ENCODE measurements at regions of chr11 and their contacts with region 1.

Region 1: DNA sequence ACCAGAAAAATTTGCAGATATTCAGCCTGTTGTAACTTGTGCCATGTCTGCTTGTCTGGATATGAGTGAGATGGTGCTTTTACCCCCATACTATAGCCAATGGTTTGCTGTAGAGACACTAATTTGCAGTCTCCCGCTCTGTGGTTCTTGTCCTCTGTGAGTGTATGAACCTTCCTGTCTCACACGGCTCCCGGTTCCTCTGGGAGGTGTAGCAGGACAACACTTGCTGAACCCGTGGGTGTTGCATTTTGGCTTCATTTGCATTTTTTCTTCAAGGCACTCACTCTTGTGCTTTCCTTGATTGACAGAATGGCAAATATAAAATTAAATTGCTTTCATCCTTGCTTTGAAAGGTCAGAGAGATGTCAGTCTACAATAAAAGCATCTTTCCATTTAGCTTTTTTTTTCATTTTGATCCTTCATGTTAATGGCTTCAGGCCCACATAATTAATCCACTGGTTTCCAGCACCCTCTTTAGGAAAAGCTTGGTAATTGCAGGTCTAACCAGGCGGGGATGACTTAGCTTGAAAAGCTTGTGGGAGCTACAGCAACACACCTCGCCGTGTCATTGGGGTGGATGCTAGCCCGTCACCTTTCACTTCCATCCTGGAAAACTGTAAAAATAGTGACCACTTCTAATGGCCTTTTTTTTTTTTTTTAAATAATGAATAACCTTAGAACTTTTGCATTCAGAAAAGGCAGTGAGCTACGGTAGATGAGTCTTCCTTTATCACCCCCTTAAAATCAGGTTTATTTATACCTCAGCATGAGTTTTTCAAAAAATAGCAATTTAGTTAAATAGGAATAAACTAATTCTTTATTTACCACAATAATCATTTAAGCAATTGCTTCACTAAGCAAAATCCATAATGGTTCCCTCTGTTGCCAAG is 27.4 kb upstream of the ST14 start:
- DNase-seq: peak; percentile 81
- ATAC-seq: peak; percentile 89
- H3K4me3 ChIP-seq: no peak overlapping the region
- H3K4me3 Mint-ChIP-seq: no peak overlapping the region
- H3K27ac ChIP-seq: no peak overlapping the region
- H3K27ac Mint-ChIP-seq: no peak overlapping the region
- H3K4me1 ChIP-seq: peaks cover 0 to 9% of the 10 kb centered on the region in 2 donors
- H3K4me1 Mint-ChIP-seq: peaks cover 14% of the 10 kb centered on the region
- H3K27me3 ChIP-seq: no peaks in the 10 kb centered on the region
- H3K27me3 Mint-ChIP-seq: no peaks in the 10 kb centered on the region
- CTCF ChIP-seq: peak; percentile 88

Region 2: GRCh38 chr11:129895126-129896041 is 236.8 kb before region 1 on chr11 and contains the start of gene NFRKB:
- CTCF ChIA-PET with region 1: interaction called, 16 read pairs
- POLR2A ChIA-PET with region 1: no interaction called
- intact Hi-C with region 1: no loop called
- DNase-seq: peak; percentile 86
- ATAC-seq: peak; percentile 97
- H3K4me3 ChIP-seq: peak within 1 kb of the TSS; percentile 71 to 92 (median 79)
- H3K4me3 Mint-ChIP-seq: peak within 1 kb of the TSS; percentile 92
- H3K27ac ChIP-seq: peak within 1 kb of the TSS; percentile 35 to 53
- H3K27ac Mint-ChIP-seq: peak within 1 kb of the TSS; percentile 82
- H3K4me1 ChIP-seq: peaks cover 10 to 14% of the 10 kb centered on the region in 2 donors
- H3K4me1 Mint-ChIP-seq: peaks cover 22% of the 10 kb centered on the region
- H3K27me3 ChIP-seq: no peaks in the 10 kb centered on the region
- H3K27me3 Mint-ChIP-seq: no peaks in the 10 kb centered on the region
- CTCF ChIP-seq: no peak
- total RNA-seq, gene NFRKB: 36.9 and 40.4 TPM in 2 replicates

Region 3: GRCh38 chr11:129930296-129930695 is 201.9 kb before region 1 on chr11:
- CTCF ChIA-PET with region 1: interaction called, 339 read pairs
- POLR2A ChIA-PET with region 1: no interaction called
- intact Hi-C with region 1: no loop called
- DNase-seq: no peak
- ATAC-seq: no peak
- H3K4me3 ChIP-seq: no peak overlapping the region
- H3K4me3 Mint-ChIP-seq: no peak overlapping the region
- H3K27ac ChIP-seq: no peak overlapping the region
- H3K27ac Mint-ChIP-seq: no peak overlapping the region
- H3K4me1 ChIP-seq: no peaks in the 10 kb centered on the region
- H3K4me1 Mint-ChIP-seq: no peaks in the 10 kb centered on the region
- H3K27me3 ChIP-seq: no peaks in the 10 kb centered on the region
- H3K27me3 Mint-ChIP-seq: no peaks in the 10 kb centered on the region
- CTCF ChIP-seq: no peak

Region 4: DNA sequence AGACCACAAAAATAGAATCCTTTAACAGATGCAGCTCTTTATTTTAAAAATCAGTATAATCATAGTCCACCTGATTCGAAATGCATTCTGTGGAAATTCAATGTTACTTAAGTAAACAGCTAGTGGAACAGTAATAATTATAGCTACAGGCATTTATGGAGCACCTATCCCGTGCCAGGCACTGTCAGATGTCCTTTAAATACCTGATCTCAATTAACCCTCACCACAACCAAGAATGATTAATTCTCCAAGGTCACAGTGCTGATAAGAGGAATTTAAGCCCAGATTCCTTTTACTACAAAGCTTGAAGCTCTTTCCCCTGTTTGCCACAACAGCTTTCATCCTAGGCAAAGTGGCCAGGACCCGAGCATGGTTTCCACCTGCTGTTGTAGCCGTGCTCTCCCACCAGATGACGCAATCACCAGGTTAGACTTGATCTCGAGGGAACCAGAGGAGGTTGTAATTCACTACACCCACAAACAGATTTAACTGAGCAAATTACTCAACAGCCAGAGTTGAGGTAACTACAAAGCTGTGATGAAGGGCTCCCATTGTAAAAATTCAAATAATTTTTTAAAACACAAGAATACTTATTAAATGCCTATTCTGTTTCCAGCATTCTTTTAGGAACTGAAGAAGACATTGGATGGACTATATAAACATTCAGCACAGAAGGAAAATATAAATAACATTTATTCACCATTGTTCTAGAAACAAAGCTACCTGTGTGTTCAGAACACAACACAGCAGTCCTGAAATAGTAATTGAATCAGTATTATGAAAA is 139.9 kb before region 1 on chr11:
- CTCF ChIA-PET with region 1: interaction called, 98 read pairs
- POLR2A ChIA-PET with region 1: interaction called, 3 read pairs
- intact Hi-C with region 1: loop called (anchors 1 kb)
- DNase-seq: peak; percentile 59
- ATAC-seq: peak; percentile 78
- H3K4me3 ChIP-seq: no peak overlapping the region
- H3K4me3 Mint-ChIP-seq: no peak overlapping the region
- H3K27ac ChIP-seq: no peak overlapping the region
- H3K27ac Mint-ChIP-seq: no peak overlapping the region
- H3K4me1 ChIP-seq: peaks cover 0 to 7% of the 10 kb centered on the region in 2 donors
- H3K4me1 Mint-ChIP-seq: peaks cover 8% of the 10 kb centered on the region
- H3K27me3 ChIP-seq: no peaks in the 10 kb centered on the region
- H3K27me3 Mint-ChIP-seq: no peaks in the 10 kb centered on the region
- CTCF ChIP-seq: peak; percentile 50

Region 5: DNA sequence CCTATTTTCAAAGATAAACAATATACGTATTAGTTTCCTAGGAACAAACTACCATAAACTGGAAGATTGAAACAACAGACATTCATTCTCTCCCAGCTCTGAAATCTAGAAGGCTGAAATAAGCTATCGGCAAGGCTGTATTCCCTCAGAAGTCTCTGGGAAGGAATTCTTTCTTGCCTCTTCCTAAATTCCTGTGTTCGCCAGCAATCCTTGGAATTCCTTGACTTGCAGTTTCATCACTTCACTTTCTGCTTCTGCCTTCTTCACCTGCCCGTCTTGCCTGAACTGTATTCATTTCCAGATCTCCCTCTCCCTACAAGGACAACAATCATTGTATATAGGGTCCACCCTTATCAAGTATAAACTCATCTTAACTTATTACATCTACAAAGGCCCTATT is 111.9 kb before region 1 on chr11:
- CTCF ChIA-PET with region 1: interaction called, 16 read pairs
- POLR2A ChIA-PET with region 1: no interaction called
- intact Hi-C with region 1: no loop called
- DNase-seq: no peak
- ATAC-seq: no peak
- H3K4me3 ChIP-seq: no peak overlapping the region
- H3K4me3 Mint-ChIP-seq: no peak overlapping the region
- H3K27ac ChIP-seq: no peak overlapping the region
- H3K27ac Mint-ChIP-seq: no peak overlapping the region
- H3K4me1 ChIP-seq: peaks cover 7 to 9% of the 10 kb centered on the region in 2 donors
- H3K4me1 Mint-ChIP-seq: peaks cover 13% of the 10 kb centered on the region
- H3K27me3 ChIP-seq: peaks cover 0 to 32% (median 16%) of the 10 kb centered on the region in 4 experiments
- H3K27me3 Mint-ChIP-seq: peaks cover 49% of the 10 kb centered on the region
- CTCF ChIP-seq: no peak

Region 6: GRCh38 chr11:130076778-130077481 is 55.3 kb before region 1 on chr11:
- CTCF ChIA-PET with region 1: interaction called, 29 read pairs
- POLR2A ChIA-PET with region 1: interaction called, 3 read pairs
- intact Hi-C with region 1: no loop called
- DNase-seq: no peak
- ATAC-seq: no peak
- H3K4me3 ChIP-seq: no peak overlapping the region
- H3K4me3 Mint-ChIP-seq: no peak overlapping the region
- H3K27ac ChIP-seq: no peak overlapping the region
- H3K27ac Mint-ChIP-seq: no peak overlapping the region
- H3K4me1 ChIP-seq: peaks cover 3 to 9% of the 10 kb centered on the region in 2 donors
- H3K4me1 Mint-ChIP-seq: peaks cover 49% of the 10 kb centered on the region
- H3K27me3 ChIP-seq: no peaks in the 10 kb centered on the region
- H3K27me3 Mint-ChIP-seq: no peaks in the 10 kb centered on the region
- CTCF ChIP-seq: no peak

Region 7: DNA sequence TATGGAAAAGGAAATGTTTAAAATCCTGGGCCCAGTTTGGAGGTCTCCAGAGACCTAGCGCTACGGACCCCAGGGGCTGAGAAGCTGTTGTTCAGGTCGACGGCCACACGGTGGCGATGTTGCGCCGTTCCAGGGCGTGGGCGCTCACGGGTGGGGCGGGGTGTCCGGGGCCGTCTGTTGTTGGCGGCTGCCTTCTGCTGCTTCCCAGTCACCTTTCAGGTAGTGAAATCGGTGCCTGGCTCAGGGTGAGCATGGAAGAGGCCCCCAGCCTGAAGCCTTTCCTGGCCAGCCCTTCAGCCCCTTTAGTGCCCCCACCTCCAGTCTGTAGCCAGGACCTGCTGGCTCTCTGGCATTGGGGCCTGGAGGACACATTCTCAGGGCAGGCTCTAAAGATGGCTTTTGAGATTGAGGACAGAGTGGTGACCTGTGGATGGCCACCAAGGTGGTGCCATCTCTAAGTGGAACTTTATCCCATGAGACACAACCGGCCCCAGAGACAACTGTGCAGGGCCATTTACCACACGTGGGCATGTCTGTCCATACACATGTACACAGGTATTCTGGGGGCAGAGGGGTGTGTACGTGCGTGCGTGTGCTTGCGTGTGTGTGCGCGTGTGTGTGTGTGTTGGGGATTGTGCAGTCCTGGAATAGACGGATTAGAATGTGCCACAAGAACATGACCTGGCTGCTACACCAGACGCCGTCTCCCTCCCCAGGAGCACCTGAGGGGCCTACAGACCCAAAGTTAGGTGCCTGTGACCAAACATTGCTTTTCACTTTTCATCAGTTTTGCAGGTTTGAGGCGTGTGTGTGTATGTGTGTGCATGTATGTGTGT is 81.2 kb after region 1 on chr11:
- CTCF ChIA-PET with region 1: interaction called, 24 read pairs
- POLR2A ChIA-PET with region 1: no interaction called
- intact Hi-C with region 1: no loop called
- DNase-seq: peak; percentile 81
- ATAC-seq: peak; percentile 98
- H3K4me3 ChIP-seq: no peak overlapping the region
- H3K4me3 Mint-ChIP-seq: no peak overlapping the region
- H3K27ac ChIP-seq: no peak overlapping the region
- H3K27ac Mint-ChIP-seq: peak overlapping the region; percentile 59
- H3K4me1 ChIP-seq: peaks cover 0 to 10% of the 10 kb centered on the region in 2 donors
- H3K4me1 Mint-ChIP-seq: peaks cover 11% of the 10 kb centered on the region
- H3K27me3 ChIP-seq: no peaks in the 10 kb centered on the region
- H3K27me3 Mint-ChIP-seq: peaks cover 4% of the 10 kb centered on the region
- CTCF ChIP-seq: peak; percentile 97